Gastrocnemius medialis (tissue), 4 donors: ENCODE measurements at regions of chr12 and their contacts with region 1.

Region 1: DNA sequence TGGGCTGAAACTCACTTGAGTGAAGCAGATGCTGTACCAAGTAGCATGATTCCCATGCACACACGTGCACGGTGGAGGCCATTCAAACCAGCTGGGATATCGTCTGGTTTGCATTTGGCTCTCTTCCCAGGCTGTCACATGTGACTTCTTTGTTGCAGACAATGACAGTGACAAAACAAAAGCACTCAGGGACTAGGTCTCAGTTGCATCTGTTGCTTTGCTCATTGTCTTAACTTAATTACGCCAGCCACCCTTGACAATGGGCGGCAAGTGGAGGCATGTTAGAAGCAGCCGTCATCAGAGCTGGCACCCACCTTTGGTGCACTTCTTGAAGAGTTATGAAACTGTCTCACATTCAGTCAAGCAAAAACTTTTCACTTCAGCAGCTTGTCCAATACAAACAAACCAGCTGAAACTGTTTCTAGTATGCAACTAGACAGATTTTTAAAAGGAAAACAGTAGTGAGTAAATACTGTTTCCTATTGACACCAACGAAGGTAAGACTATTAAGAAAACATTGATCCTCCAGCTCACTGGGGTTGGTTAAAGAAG is 74.3 kb downstream of the IGF1 start:
- DNase-seq: peak; percentile 49 to 75
- ATAC-seq: peak; percentile 58 to 67
- H3K4me3 ChIP-seq: no peak overlapping the region
- H3K27ac ChIP-seq: peak overlapping the region in 3 of 4 donors; percentile 12 to 26 (median 13)
- H3K4me1 ChIP-seq: peaks cover 17 to 35% of the 10 kb centered on the region in 2 donors
- H3K27me3 ChIP-seq: no peaks in the 10 kb centered on the region
- CTCF ChIP-seq: no peak
- POLR2A ChIP-seq: no peak

Region 2: DNA sequence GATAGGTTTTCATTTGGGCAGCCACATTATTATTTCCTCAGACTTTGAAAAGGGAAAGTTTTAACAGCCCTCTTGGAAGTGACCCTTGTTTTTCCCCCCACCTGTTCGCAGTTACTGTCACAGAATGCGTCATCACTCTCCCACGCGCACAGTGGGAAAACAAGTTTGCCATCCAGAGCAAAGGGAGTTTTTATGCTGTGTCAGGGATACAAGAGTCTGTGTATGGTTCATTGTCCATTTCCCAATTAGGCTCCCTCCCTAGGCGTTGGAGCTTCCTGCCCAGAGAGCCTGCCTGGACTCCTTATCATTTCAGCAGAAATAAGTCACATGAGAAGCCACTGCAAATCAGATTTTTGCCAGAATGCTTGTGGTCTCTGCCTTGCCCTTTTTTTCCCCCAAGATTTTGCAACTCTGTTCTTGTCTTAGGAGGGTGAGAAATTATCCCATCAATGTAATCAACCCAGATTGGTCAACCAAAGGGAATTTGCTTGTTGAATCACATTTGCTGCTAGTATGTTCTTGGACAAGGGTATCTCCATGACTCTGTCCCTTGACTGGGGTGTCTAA is 29.8 kb before region 1 on chr12:
- in situ Hi-C with region 1: no loop called
- intact Hi-C with region 1: loop called (anchors 1 kb)
- DNase-seq: peak; percentile 56 to 83
- ATAC-seq: peak; percentile 87 to 92
- H3K4me3 ChIP-seq: no peak overlapping the region
- H3K27ac ChIP-seq: peak overlapping the region; percentile 65 to 79 (median 74)
- H3K4me1 ChIP-seq: peaks cover 7 to 14% of the 10 kb centered on the region in 2 donors
- H3K27me3 ChIP-seq: no peaks in the 10 kb centered on the region
- CTCF ChIP-seq: no peak
- POLR2A ChIP-seq: no peak